AG04450 (cell line): ENCODE measurements at regions of chr17 and their contacts with region 1.

Region 1: GRCh38 chr17:7931709-7932482 is at the starts of genes CNTROB and TRAPPC1:
- DNase-seq: peak; percentile 97
- H3K4me3 ChIP-seq: peak within 1 kb of the TSS; percentile 100
- H3K27ac ChIP-seq: peak within 1 kb of the TSS; percentile 70
- H3K27me3 ChIP-seq: no peaks in the 10 kb centered on the region
- CTCF ChIP-seq: no peak
- polyA plus RNA-seq, gene CNTROB: 11.3 and 12.9 TPM in 2 replicates
- polyA plus RNA-seq, gene TRAPPC1: 202 and 227 TPM in 2 replicates

Region 2: GRCh38 chr17:7825206-7825990 is 106.5 kb before region 1 on chr17:
- CTCF ChIA-PET with region 1: no interaction called
- POLR2A ChIA-PET with region 1: no interaction called
- DNase-seq: no peak
- H3K4me3 ChIP-seq: no peak overlapping the region
- H3K27ac ChIP-seq: no peak overlapping the region
- H3K27me3 ChIP-seq: peaks cover 9% of the 10 kb centered on the region
- CTCF ChIP-seq: no peak

Region 3: DNA sequence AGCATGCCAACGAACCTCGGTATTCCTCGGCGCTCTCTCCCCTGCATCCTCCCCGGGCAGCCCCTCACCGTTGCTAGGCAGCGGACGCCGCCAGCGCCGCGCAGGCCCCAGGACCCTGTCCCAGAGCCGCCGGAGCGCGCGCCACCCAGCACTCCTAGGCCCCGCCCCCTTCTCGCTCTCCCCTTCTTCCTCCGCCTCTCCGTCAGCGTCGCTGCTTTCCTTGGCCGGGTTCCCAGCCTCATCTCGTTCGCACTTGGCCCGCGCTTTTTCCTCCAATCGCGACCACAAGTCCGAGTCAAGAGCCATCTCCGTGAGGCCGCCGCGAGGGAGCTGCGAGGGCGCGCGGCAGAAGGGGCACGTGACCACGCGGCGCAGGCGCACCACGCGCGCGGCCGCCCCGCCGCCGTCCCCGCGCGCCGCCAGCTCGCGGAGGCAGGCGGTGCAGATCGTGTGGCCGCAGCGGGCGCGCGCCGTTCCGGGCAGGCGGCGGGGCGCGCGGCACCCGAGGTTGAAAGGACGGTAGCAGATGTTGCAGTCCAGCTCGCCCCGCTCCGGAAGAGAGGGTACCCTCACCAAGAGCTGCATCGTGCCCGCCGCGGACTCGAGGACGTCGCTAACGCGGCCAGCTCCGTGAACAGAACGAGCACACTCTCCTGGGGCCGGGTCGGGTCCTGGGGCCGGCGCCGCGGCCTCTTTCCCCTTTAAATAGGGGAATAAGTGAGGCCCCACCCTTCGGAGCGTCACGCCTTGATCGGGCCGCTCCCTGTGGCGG is 16.1 kb before region 1 on chr17 and contains the start of gene RNF227:
- CTCF ChIA-PET with region 1: interaction called, 8 read pairs
- POLR2A ChIA-PET with region 1: interaction called, 15 read pairs
- DNase-seq: peak; percentile 92
- H3K4me3 ChIP-seq: peak within 1 kb of the TSS; percentile 74
- H3K27ac ChIP-seq: peak within 1 kb of the TSS; percentile 89
- H3K27me3 ChIP-seq: no peaks in the 10 kb centered on the region
- CTCF ChIP-seq: no peak
- polyA plus RNA-seq, gene RNF227: 1.3 and 1.4 TPM in 2 replicates